Left ventricle myocardium inferior (tissue), 1 donor: ENCODE measurements at regions of chr19 and their contacts with region 1.

Region 1: GRCh38 chr19:9796113-9796773 is 22.6 kb downstream of the FBXL12 start:
- DNase-seq: peak; percentile 77
- H3K4me3 ChIP-seq: no peak overlapping the region
- H3K27ac ChIP-seq: peak overlapping the region; percentile 42
- H3K4me1 ChIP-seq: peaks cover 13% of the 10 kb centered on the region
- H3K27me3 ChIP-seq: no peaks in the 10 kb centered on the region
- CTCF ChIP-seq: peak; percentile 87

Region 2: GRCh38 chr19:9205501-9206113 is 590.6 kb before region 1 on chr19:
- intact Hi-C with region 1: loop called (anchors 10 kb)
- DNase-seq: peak; percentile 62
- H3K4me3 ChIP-seq: peak overlapping the region; percentile 51
- H3K27ac ChIP-seq: no peak overlapping the region
- H3K4me1 ChIP-seq: peaks cover 4% of the 10 kb centered on the region
- H3K27me3 ChIP-seq: peaks cover 71% of the 10 kb centered on the region
- CTCF ChIP-seq: peak; percentile 91

Region 3: DNA sequence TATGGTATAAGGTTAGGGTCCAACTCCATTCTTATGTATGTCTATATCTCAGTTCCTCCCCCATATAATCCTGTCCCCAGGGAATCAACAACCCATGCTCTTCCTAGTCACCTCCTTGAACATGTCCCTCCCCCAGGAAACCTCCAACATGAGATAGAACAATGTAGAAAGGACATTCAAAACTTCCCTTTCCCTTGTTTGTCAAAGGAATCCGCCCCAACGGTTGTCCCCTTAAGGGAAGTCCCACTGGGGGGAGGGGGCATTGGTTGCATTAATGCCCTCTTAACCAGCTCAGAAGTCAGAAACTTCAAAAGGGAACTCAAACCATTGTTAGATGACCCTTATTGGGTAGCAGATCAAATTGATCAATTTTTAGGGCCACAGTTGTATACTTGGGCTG is 168.4 kb before region 1 on chr19:
- intact Hi-C with region 1: loop called (anchors 5 kb)
- DNase-seq: no peak
- H3K4me3 ChIP-seq: no peak overlapping the region
- H3K27ac ChIP-seq: no peak overlapping the region
- H3K4me1 ChIP-seq: peaks cover 10% of the 10 kb centered on the region
- H3K27me3 ChIP-seq: no peaks in the 10 kb centered on the region
- CTCF ChIP-seq: no peak

Region 4: DNA sequence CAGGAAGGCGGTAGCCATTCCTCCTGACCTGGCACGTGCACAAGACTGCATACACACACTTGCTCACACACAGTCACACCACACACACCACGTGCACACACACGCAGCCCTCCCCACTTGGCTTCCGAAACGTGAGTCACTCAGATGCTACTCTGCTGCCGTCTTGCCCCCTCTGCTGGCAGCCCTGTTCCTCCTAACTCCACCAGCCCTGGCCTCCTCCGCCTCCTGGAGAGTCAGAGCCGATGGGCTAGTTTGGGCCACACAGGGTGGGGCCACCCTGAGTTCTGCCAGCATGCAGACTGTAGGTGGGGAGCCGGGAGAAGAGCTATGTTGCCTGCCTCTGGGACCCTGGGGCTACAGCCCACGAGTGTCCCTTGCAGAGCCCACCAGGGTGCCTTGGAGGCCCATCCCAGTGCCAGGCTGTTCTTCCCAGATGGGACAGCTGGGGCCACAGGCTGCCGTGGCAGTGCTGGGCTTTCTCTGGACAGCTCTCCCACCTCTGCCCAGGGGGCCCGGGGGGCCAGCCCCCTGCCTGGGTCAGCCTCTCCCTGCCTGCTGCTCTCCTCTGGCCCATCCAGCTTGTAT is 50.9 kb after region 1 on chr19:
- intact Hi-C with region 1: no loop called
- DNase-seq: no peak
- H3K4me3 ChIP-seq: no peak overlapping the region
- H3K27ac ChIP-seq: no peak overlapping the region
- H3K4me1 ChIP-seq: peaks cover 22% of the 10 kb centered on the region
- H3K27me3 ChIP-seq: no peaks in the 10 kb centered on the region
- CTCF ChIP-seq: peak; percentile 34